K562 (cell line): ENCODE measurements at regions of chr3 and their contacts with region 1.

Region 1: GRCh38 chr3:171772427-171773056 is 37.7 kb downstream of the PLD1 start:
- DNase-seq: peak; percentile 31 to 80 (median 52)
- ATAC-seq: peak; percentile 79
- H3K4me3 ChIP-seq: no peak overlapping the region
- H3K27ac ChIP-seq: no peak overlapping the region
- H3K4me1 ChIP-seq: peaks cover 0 to 6% of the 10 kb centered on the region in 2 experiments; a peak in 2 of 5 replicates
- H3K27me3 ChIP-seq: no peaks in the 10 kb centered on the region
- CTCF ChIP-seq: peak; percentile 73 to 82 (median 82)
- EP300 ChIP-seq: no peak
- POLR2A ChIP-seq: no peak
- RAD21 ChIP-seq: peak; percentile 72 to 79

Region 2: DNA sequence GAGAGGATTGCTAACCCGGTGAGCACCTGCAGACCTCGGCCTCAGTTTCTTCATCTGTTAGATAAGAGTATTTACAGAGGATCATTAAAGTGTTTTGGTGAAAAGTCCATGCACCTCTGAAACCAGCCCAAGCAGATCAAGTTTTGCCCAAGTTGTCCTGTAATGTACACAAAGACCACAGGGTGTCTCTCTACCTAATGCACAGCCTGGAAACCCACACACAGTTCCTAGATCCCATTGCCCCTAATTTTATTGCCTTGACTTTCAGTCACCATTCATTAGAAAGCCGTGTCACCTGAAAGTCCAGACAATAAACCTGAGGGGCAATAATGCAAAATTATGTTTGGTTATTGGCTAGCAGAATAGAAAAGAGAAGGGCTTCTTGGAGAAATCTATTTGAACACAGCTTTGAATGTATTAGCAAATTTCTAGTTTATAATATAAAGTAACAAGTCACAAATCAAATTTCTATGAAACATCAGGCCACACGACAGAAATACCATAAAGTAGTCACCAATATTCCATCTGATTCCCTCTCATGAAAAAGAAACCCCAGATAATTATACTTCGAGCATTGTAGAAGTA is 584.7 kb before region 1 on chr3:
- CTCF ChIA-PET with region 1: no interaction called
- POLR2A ChIA-PET with region 1: no interaction called
- in situ Hi-C with region 1: no loop called
- intact Hi-C with region 1: loop called (anchors 5 kb)
- DNase-seq: peak; percentile 32 to 63 (median 46)
- ATAC-seq: peak; percentile 62
- H3K4me3 ChIP-seq: no peak overlapping the region
- H3K27ac ChIP-seq: no peak overlapping the region
- H3K4me1 ChIP-seq: peaks cover 4 to 35% of the 10 kb centered on the region in 2 experiments
- H3K27me3 ChIP-seq: no peaks in the 10 kb centered on the region
- CTCF ChIP-seq: peak; percentile 67 to 71 (median 70)
- EP300 ChIP-seq: no peak
- POLR2A ChIP-seq: no peak
- RAD21 ChIP-seq: peak; percentile 67 to 81

Region 3: GRCh38 chr3:171614318-171614921 is 158.1 kb before region 1 on chr3:
- CTCF ChIA-PET with region 1: no interaction called
- POLR2A ChIA-PET with region 1: no interaction called
- in situ Hi-C with region 1: no loop called
- intact Hi-C with region 1: loop called (anchors 1 kb)
- DNase-seq: peak; percentile 32 to 57 (median 46)
- ATAC-seq: peak; percentile 96
- H3K4me3 ChIP-seq: no peak overlapping the region
- H3K27ac ChIP-seq: no peak overlapping the region
- H3K4me1 ChIP-seq: no peaks in the 10 kb centered on the region
- H3K27me3 ChIP-seq: no peaks in the 10 kb centered on the region
- CTCF ChIP-seq: peak; percentile 74 to 81 (median 76)
- EP300 ChIP-seq: no peak
- POLR2A ChIP-seq: no peak
- RAD21 ChIP-seq: peak in 1 of 2 experiments; percentile 72; a peak in 3 of 4 replicates

Region 4: DNA sequence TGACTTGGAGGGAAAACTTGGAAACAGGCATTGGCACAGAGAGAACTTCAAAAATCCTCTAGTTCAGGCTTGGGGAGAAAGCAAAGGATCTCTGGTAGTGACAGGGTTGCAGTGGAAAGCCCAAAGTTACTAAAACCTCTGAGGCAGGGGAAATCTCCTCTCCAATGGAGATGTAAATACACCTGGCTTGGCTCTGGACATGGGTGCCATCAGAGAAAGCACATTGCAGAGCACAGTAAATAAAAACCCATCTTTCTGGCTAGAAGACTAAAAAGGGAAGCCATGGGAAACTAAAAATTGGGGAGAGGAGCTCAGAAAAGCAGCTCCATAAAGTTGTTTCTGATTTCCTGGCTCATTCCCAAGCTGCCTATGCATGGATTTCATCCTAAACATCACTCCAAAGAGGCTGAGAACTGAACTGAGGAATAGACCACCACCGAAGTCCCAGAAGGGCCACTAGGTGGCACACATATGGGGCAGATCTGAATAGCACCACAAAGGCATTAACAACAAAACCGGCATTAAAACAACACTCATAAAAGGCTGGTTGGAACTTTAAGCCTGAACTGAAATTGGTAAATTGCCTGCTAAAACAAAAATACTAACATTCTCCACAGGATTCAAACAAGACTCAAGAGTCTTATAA is 68.7 kb before region 1 on chr3:
- CTCF ChIA-PET with region 1: interaction called, 3 read pairs
- POLR2A ChIA-PET with region 1: no interaction called
- in situ Hi-C with region 1: no loop called
- intact Hi-C with region 1: loop called (anchors 5 kb)
- DNase-seq: peak; percentile 15 to 37 (median 22)
- ATAC-seq: peak; percentile 75
- H3K4me3 ChIP-seq: no peak overlapping the region
- H3K27ac ChIP-seq: no peak overlapping the region
- H3K4me1 ChIP-seq: no peaks in the 10 kb centered on the region
- H3K27me3 ChIP-seq: no peaks in the 10 kb centered on the region
- CTCF ChIP-seq: peak; percentile 27 to 45 (median 38); a peak in 5 of 6 replicates
- EP300 ChIP-seq: no peak
- POLR2A ChIP-seq: no peak
- RAD21 ChIP-seq: peak in 1 of 2 experiments; percentile 45; a peak in 1 of 4 replicates

Region 5: DNA sequence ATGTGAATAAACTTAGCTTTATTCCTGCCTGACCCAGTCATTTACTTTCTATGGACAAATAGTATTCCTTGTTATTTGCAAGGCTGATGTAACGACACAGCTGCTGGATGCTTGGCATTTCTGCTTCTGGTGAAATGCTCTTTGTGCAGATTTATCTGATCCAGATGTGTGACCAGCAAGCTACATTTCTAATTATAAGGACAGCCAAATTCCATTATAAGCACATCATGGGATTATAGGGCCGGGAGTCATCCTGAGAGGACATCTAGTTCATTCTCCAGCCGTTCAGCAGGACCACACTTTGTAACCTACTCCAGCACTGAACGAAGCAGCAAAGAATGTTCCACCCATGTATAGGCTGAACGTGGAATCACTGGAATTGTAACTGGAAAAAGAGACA is 309.7 kb after region 1 on chr3:
- CTCF ChIA-PET with region 1: no interaction called
- POLR2A ChIA-PET with region 1: no interaction called
- in situ Hi-C with region 1: no loop called
- intact Hi-C with region 1: no loop called
- DNase-seq: no peak
- ATAC-seq: no peak
- H3K4me3 ChIP-seq: no peak overlapping the region
- H3K27ac ChIP-seq: no peak overlapping the region
- H3K4me1 ChIP-seq: peaks cover 4 to 38% of the 10 kb centered on the region in 2 experiments; a peak in 4 of 5 replicates
- H3K27me3 ChIP-seq: no peaks in the 10 kb centered on the region
- CTCF ChIP-seq: no peak
- EP300 ChIP-seq: no peak
- POLR2A ChIP-seq: no peak
- RAD21 ChIP-seq: no peak